BJ (cell line): ENCODE measurements at regions of chrX and their contacts with region 1.

Region 1: DNA sequence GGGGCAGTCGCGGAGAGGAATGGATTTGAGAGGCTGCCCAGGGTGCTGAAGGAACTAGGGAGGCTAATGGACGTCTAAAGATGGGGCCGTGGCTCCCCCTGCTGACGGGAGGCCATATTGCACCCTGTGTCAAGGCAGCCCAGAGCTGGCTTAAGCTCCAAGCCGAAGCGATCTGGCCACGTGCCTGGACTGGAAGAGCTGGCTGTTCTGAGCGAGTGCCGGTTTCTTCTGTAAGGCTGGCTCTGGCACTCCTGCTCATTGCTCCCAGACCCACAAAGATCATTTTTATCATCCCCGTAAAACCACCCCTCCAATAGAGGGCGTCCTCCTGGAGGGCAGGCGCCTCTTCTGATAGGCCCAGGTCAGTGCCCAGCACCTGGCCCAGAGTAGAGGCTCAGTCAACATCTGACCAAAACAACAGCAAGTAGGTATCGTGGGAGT is 5.6 kb downstream of the PNCK start:
- DNase-seq: peak; percentile 5
- H3K4me3 ChIP-seq: no peak overlapping the region; the same call in 1 of the 2 replicates
- H3K27me3 ChIP-seq: no peaks in the 10 kb centered on the region; the same call in none of the 2 replicates
- CTCF ChIP-seq: peak; percentile 71

Region 2: DNA sequence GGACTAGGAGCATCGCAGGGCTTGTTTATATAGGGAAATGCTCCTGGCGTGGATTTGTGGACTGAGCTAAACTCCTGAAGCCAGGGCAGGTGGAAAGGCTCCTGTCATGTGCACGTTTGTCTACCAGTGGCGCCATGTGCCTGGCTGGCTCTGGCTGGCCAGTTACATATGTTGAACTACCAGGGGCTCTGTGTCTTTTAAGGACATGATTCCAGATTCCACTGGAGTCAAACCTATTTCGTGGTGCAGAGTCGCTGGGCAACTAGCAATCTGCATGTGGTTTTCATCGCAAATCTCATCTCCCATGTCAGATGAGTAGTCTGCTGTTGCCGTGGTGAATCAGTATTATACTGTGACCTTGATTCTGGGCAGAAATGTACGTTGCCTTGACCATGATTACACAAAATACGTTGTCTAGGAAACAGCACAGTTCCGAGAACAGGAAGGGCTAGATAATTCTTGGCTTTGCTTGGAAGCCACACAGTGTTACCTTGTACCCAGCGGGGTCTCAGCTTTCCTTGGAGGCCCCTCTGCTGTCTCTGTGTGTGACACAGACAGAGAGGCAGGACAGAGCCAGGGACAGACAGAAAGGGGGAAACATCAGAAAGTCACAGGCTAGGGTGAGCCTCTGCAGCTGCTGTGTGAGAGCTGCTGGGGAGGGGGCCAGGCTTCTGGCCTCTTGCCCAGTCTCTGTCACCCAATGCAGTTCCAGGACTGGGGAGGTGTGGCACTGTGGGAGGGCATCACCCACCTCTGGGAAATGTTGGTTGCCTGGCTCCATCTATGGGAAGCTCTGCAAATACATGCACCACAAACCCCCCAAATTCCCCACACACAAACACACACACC is 286.1 kb before region 1 on chrX:
- CTCF ChIA-PET with region 1: no interaction called
- POLR2A ChIA-PET with region 1: no interaction called
- DNase-seq: peak; percentile 65
- H3K4me3 ChIP-seq: no peak overlapping the region
- H3K27me3 ChIP-seq: no peaks in the 10 kb centered on the region
- CTCF ChIP-seq: peak; percentile 20; the same call in 1 of the 2 replicates

Region 3: GRCh38 chrX:153494541-153495361 is 173.2 kb before region 1 on chrX and contains the start of gene BGN:
- CTCF ChIA-PET with region 1: no interaction called
- POLR2A ChIA-PET with region 1: no interaction called
- DNase-seq: no peak
- H3K4me3 ChIP-seq: peak within 1 kb of the TSS; percentile 71
- H3K27me3 ChIP-seq: no peaks in the 10 kb centered on the region
- CTCF ChIP-seq: peak; percentile 46
- polyA plus RNA-seq, gene BGN: 284 and 487 TPM in 2 replicates

Region 4: DNA sequence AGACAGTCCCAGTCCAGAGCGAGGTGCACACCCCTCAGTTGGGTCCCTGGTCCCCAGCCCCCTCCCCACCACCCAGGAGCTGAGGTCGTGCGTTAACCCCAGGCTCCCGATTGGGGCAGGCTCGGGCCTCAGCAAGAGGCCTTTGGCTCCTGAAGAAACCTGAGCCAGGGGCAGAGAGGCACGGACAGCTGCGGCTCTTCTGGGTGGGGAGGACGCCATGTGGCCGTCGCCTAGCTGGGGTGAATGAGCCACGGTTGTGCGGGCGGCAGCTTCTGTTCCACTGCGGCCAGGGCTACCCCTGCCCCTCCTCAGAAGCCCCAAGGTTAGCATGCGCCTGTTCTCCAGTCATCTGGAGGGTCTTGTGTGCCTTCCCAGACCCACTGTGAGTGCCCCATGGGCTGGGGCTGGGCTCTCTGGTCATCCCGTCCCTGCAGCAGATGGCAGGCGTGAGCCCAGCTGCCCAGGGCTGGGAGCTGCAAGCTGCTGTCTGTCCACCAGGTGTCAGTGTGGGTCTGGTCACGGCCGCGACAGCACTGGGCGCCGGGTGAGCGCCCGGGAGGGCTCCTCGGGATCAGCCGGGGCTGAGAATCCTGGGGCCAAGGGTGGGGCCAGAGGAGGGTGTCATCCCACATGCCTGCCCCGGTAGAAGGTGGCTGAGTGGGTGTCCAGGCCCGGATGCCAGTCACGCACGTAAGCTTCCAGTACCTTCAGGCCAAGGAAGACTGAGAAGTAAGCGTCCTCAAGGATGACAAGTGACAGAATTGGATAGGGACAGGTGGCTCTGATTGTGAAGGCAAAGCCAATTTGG is 128.6 kb before region 1 on chrX:
- CTCF ChIA-PET with region 1: interaction called, 52 read pairs
- POLR2A ChIA-PET with region 1: no interaction called
- DNase-seq: no peak
- H3K4me3 ChIP-seq: no peak overlapping the region
- H3K27me3 ChIP-seq: no peaks in the 10 kb centered on the region; the same call in 1 of the 2 replicates
- CTCF ChIP-seq: peak; percentile 90

Region 5: DNA sequence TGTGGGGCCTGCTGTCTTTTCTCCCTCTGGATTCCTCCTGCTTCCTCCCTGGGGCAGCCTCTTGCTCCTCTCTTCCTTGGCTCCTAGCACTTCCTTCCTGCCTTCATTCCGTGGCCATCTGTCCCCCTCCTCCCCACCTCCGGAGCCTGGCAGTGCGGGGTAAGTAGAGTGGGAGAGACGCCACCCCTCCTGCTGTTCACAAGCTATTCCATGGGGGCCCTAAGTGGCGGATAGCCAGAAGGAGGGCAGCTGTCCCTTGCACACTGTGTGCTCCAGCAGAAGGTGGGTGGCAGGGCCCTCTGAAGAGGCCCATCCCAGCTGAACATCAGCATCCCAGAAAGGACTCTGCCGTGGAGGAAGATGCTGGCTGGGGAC is 96.5 kb before region 1 on chrX:
- CTCF ChIA-PET with region 1: no interaction called
- POLR2A ChIA-PET with region 1: no interaction called
- DNase-seq: no peak
- H3K4me3 ChIP-seq: no peak overlapping the region
- H3K27me3 ChIP-seq: no peaks in the 10 kb centered on the region; the same call in 1 of the 2 replicates
- CTCF ChIP-seq: no peak

Region 6: GRCh38 chrX:153609917-153610428 is 58.0 kb before region 1 on chrX:
- CTCF ChIA-PET with region 1: interaction called, 19 read pairs
- POLR2A ChIA-PET with region 1: no interaction called
- DNase-seq: no peak
- H3K4me3 ChIP-seq: peak overlapping the region; percentile 39
- H3K27me3 ChIP-seq: 0 out of 2 replicates have a peak, but pooled peaks cover 2% of the 10 kb centered on the region
- CTCF ChIP-seq: peak; percentile 80

Region 7: DNA sequence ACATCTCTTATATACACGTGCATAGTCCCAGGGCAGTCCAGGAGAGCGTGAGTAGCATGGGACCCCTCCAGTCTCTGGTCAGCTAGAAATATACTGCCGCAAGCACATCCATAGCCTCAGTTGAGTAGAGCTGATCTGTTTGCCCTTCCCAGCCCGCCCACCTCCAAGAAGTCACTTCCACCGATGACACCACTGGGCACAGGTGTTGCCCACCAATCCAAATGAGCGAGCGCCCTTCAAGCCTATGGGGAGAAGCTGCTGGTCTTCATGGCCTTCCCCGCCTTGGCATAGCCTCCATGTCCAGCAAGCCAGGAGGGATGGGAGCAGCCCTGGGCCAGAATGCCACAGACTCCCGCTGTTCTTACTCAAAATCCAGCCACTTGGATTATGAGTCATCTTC is 10.8 kb before region 1 on chrX:
- CTCF ChIA-PET with region 1: interaction called, 19 read pairs
- POLR2A ChIA-PET with region 1: no interaction called
- DNase-seq: no peak
- H3K4me3 ChIP-seq: no peak overlapping the region
- H3K27me3 ChIP-seq: no peaks in the 10 kb centered on the region
- CTCF ChIP-seq: no peak